CD4-positive, alpha-beta memory T cell (primary cell): ENCODE measurements at regions of chr7 and their contacts with region 1.

Region 1: DNA sequence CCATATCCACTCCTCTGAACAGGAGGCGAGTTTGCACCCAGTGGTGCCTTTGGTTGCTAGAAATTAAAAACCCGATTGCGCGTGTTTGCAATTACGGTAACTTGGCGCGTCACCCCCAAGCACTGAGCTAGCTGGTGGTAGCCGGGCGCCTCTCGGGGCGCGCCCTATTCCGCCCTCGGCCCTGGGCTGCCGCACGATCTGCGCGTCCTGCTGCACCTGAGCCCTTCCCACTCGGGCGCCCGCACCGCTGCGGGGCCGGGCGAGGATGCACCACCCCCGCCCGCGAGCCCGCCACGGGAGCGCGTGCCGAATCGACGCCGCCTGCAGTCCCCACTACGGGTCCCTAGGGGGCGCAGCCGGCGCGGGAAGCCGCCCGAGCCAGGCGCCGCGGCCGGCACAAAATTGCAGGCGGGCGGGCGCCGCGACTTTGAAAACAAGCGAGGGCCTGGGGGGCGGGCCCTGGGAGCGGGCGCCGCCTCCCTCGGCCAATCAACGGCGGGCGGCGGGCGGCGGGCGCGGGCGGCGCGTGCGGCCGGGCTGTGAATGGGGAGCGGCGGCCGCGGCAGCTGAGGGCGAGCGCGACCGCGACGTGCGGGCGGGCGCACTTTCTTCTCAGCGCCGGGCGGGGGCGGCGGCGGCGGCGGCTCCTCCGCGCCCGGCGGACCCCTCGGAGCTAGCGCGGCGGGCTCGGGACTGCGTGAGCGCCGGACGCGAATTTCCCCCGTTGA is at the start of gene SDK1:
- DNase-seq: peak; percentile 84 to 93 (median 91)
- H3K4me3 ChIP-seq: peak within 1 kb of the TSS; percentile 28 to 39
- H3K4me3 Mint-ChIP-seq: peak within 1 kb of the TSS; percentile 84 to 94 (median 87)
- H3K27ac ChIP-seq: no peak within 1 kb of the TSS
- H3K27ac Mint-ChIP-seq: peak within 1 kb of the TSS in 2 of 7 donors; percentile 53 to 92
- H3K4me1 ChIP-seq: peaks cover 18% of the 10 kb centered on the region
- H3K4me1 Mint-ChIP-seq: peaks cover 8 to 11% (median 9%) of the 10 kb centered on the region in 4 donors
- H3K27me3 ChIP-seq: peaks cover 4% of the 10 kb centered on the region
- H3K27me3 Mint-ChIP-seq: peaks cover 6 to 15% of the 10 kb centered on the region in 2 donors
- total RNA-seq, gene SDK1: 0.06 to 0.26 TPM

Region 2: GRCh38 chr7:3427957-3428356 is 127.1 kb after region 1 on chr7:
- CTCF ChIA-PET with region 1: no interaction called
- POLR2A ChIA-PET with region 1: no interaction called
- intact Hi-C with region 1: no loop called
- DNase-seq: peak in 1 of 5 donors; percentile 30
- H3K4me3 ChIP-seq: no peak overlapping the region
- H3K4me3 Mint-ChIP-seq: no peak overlapping the region
- H3K27ac ChIP-seq: no peak overlapping the region
- H3K27ac Mint-ChIP-seq: no peak overlapping the region
- H3K4me1 ChIP-seq: no peaks in the 10 kb centered on the region
- H3K4me1 Mint-ChIP-seq: no peaks in the 10 kb centered on the region
- H3K27me3 ChIP-seq: no peaks in the 10 kb centered on the region
- H3K27me3 Mint-ChIP-seq: peaks cover 0 to 2% of the 10 kb centered on the region in 2 donors

Region 3: GRCh38 chr7:3461923-3462322 is 161.1 kb after region 1 on chr7:
- CTCF ChIA-PET with region 1: interaction called, 4 read pairs
- POLR2A ChIA-PET with region 1: no interaction called
- intact Hi-C with region 1: loop called (anchors 5 kb)
- DNase-seq: peak; percentile 75 to 82 (median 78)
- H3K4me3 ChIP-seq: peak overlapping the region; percentile 13 to 17
- H3K4me3 Mint-ChIP-seq: peak overlapping the region; percentile 46 to 78 (median 71)
- H3K27ac ChIP-seq: no peak overlapping the region
- H3K27ac Mint-ChIP-seq: peak overlapping the region; percentile 50 to 92 (median 79)
- H3K4me1 ChIP-seq: peaks cover 24% of the 10 kb centered on the region
- H3K4me1 Mint-ChIP-seq: peaks cover 23 to 30% (median 28%) of the 10 kb centered on the region in 4 donors
- H3K27me3 ChIP-seq: no peaks in the 10 kb centered on the region
- H3K27me3 Mint-ChIP-seq: no peaks in the 10 kb centered on the region

Region 4: GRCh38 chr7:3673524-3673923 is 372.7 kb after region 1 on chr7:
- CTCF ChIA-PET with region 1: interaction called, 12 read pairs
- POLR2A ChIA-PET with region 1: interaction called, 4 read pairs
- intact Hi-C with region 1: loop called (anchors 1 kb)
- DNase-seq: peak in 4 of 5 donors; percentile 37 to 44 (median 41)
- H3K4me3 ChIP-seq: no peak overlapping the region
- H3K4me3 Mint-ChIP-seq: no peak overlapping the region
- H3K27ac ChIP-seq: no peak overlapping the region
- H3K27ac Mint-ChIP-seq: no peak overlapping the region
- H3K4me1 ChIP-seq: no peaks in the 10 kb centered on the region
- H3K4me1 Mint-ChIP-seq: no peaks in the 10 kb centered on the region
- H3K27me3 ChIP-seq: no peaks in the 10 kb centered on the region
- H3K27me3 Mint-ChIP-seq: peaks cover 0 to 3% of the 10 kb centered on the region in 2 donors

Region 5: DNA sequence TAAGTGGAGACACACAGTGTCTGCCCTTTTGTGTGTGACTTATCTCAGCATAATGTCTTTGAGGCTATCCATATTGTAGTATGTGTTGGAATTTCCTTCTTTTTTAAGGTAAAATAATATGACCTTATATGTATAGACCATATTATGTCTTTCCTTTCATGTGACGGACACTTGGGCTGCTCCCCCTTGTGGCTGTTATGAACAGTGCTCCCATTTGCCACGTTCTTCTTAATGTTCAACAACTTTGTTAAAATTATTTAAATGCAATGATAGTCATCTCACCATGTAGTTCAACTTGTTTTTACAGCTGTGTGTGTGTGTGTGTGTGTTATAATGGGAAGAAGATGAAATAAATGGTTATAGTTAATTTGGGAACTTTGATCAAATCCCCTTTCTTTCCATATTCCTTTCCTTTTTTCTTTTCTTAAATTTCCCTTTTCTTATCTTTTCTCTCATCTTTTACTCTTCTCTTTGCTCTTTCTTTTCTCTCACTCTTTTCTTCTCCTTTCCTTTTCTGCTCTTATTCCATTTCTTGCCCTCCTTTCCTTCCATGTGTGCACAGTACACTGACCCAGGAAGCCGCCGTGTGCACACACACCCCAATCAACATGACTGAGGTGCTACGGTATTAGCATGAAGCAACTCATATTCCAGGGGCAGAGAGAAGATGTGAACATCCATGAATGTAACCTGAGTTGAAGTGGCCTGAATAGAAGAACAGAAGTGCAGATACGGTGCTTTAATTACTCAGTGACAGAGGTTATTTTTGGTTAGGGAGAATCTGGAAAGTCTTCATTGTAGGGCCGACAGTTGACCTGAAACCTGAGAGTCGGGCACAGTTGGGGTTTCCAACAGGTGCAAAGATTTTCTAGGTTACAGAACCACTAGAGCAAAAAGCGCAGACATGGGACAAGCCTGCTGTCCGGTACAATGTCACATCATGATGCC is 596.9 kb after region 1 on chr7:
- CTCF ChIA-PET with region 1: interaction called, 62 read pairs
- POLR2A ChIA-PET with region 1: no interaction called
- intact Hi-C with region 1: loop called (anchors 1 kb)
- DNase-seq: peak in 4 of 5 donors; percentile 32 to 49 (median 42)
- H3K4me3 ChIP-seq: no peak overlapping the region
- H3K4me3 Mint-ChIP-seq: no peak overlapping the region
- H3K27ac ChIP-seq: no peak overlapping the region
- H3K27ac Mint-ChIP-seq: no peak overlapping the region
- H3K4me1 ChIP-seq: no peaks in the 10 kb centered on the region
- H3K4me1 Mint-ChIP-seq: no peaks in the 10 kb centered on the region
- H3K27me3 ChIP-seq: no peaks in the 10 kb centered on the region
- H3K27me3 Mint-ChIP-seq: peaks cover 2 to 4% of the 10 kb centered on the region in 2 donors